ENCODE measurements at regions of chr4 and their contacts with region 1.

Region 1: GRCh38 chr4:72295966-72296557 is 264.3 kb downstream of the NPFFR2 start:
- DNase-seq: peak; percentile 57
- ATAC-seq: peak; percentile 98
- H3K4me3 ChIP-seq: no peak overlapping the region
- H3K27ac ChIP-seq: no peak overlapping the region
- H3K4me1 ChIP-seq: no peaks in the 10 kb centered on the region
- H3K27me3 ChIP-seq: no peaks in the 10 kb centered on the region
- CTCF ChIP-seq: peak; percentile 75
- POLR2A ChIP-seq: no peak
- RAD21 ChIP-seq: peak; percentile 78

Region 2: DNA sequence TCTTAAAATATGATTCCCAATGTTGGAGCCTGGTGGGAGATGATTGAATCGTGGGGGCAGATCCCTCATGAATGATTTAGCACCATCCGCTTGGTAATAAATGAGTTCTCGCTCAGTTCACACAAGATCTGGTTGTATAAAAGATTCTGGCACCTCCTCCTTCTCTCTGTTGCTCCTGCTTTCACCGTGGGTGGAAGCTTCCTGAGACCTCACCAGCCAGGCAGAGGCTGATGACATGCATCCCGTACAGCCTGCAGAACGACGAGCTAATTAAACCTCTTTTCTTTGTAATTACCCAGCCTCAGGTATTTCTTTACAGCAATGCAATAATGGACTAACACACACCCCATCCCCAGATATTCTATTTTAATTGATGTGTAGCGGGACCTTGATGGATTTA is 102.0 kb before region 1 on chr4:
- CTCF ChIA-PET with region 1: no interaction called
- POLR2A ChIA-PET with region 1: no interaction called
- dilution Hi-C with region 1: no loop called
- in situ Hi-C with region 1: no loop called
- intact Hi-C with region 1: no loop called
- DNase-seq: no peak
- ATAC-seq: no peak
- H3K4me3 ChIP-seq: no peak overlapping the region
- H3K27ac ChIP-seq: no peak overlapping the region
- H3K4me1 ChIP-seq: no peaks in the 10 kb centered on the region
- H3K27me3 ChIP-seq: no peaks in the 10 kb centered on the region
- CTCF ChIP-seq: no peak
- POLR2A ChIP-seq: no peak
- RAD21 ChIP-seq: no peak

Region 3: DNA sequence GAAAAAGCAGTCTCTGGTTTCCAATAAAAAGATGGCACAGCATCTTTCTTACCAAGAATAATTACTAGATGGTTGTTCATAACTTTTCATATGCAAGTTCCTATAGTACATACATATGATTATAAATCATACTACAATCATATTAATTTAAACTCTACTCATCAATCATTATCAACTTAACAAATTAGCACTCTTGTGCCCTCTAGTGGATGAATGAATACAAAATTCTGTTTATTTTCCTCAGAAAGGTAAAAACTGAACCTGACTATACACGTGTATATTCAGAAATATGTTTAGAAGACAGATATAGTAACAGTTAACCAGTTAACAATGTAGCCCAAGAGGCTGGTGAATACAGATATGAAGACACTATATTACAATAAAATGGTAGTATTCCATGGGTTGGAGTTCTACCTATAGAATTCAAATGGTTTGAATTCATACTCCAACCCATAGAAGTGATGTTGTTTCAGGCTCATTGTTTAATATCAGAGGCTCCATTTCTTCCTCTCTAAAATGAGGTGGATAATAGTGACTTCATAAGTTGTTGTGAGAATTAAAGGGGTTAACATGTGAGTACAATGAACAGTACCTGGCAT is 172.9 kb after region 1 on chr4:
- CTCF ChIA-PET with region 1: interaction called, 4 read pairs
- POLR2A ChIA-PET with region 1: no interaction called
- dilution Hi-C with region 1: no loop called
- in situ Hi-C with region 1: no loop called
- intact Hi-C with region 1: loop called (anchors 1 kb)
- DNase-seq: peak; percentile 20
- ATAC-seq: no peak
- H3K4me3 ChIP-seq: no peak overlapping the region
- H3K27ac ChIP-seq: no peak overlapping the region
- H3K4me1 ChIP-seq: no peaks in the 10 kb centered on the region
- H3K27me3 ChIP-seq: no peaks in the 10 kb centered on the region
- CTCF ChIP-seq: peak; percentile 61
- POLR2A ChIP-seq: no peak
- RAD21 ChIP-seq: peak; percentile 49

Region 4: DNA sequence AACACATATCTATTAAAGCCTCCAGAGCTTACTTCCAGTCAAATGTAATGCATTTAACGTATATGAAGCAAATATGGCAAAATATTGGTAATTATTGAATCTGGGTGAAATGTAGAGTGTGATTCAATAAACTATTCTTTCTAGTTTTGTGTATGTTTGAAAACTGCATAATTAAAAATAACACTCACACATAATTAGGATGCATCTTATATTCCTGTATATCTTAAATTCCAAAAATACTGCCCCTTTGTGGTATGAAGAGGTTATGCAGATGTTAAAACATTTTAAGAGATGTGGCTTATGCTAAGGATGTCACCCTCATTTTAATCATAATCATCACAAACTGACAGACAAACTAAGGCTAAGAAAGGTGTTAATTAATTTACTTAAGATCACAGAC is 590.5 kb after region 1 on chr4:
- CTCF ChIA-PET with region 1: no interaction called
- POLR2A ChIA-PET with region 1: no interaction called
- dilution Hi-C with region 1: no loop called
- in situ Hi-C with region 1: no loop called
- intact Hi-C with region 1: loop called (anchors 5 kb)
- DNase-seq: no peak
- ATAC-seq: 0 out of 2 replicates have a peak, but pooled peaks have one; percentile 40
- H3K4me3 ChIP-seq: no peak overlapping the region
- H3K27ac ChIP-seq: no peak overlapping the region
- H3K4me1 ChIP-seq: no peaks in the 10 kb centered on the region
- H3K27me3 ChIP-seq: no peaks in the 10 kb centered on the region
- CTCF ChIP-seq: peak; percentile 39
- POLR2A ChIP-seq: no peak
- RAD21 ChIP-seq: no peak

Region 5: GRCh38 chr4:73019462-73020047 is 723.5 kb after region 1 on chr4:
- CTCF ChIA-PET with region 1: no interaction called
- POLR2A ChIA-PET with region 1: no interaction called
- dilution Hi-C with region 1: no loop called
- in situ Hi-C with region 1: no loop called
- intact Hi-C with region 1: loop called (anchors 2 kb)
- DNase-seq: peak; percentile 47
- ATAC-seq: peak; percentile 27; the same call in 1 of the 2 replicates
- H3K4me3 ChIP-seq: no peak overlapping the region
- H3K27ac ChIP-seq: no peak overlapping the region
- H3K4me1 ChIP-seq: no peaks in the 10 kb centered on the region
- H3K27me3 ChIP-seq: no peaks in the 10 kb centered on the region; the same call in 1 of the 2 replicates
- CTCF ChIP-seq: peak; percentile 83
- POLR2A ChIP-seq: no peak
- RAD21 ChIP-seq: peak; percentile 80

Region 6: DNA sequence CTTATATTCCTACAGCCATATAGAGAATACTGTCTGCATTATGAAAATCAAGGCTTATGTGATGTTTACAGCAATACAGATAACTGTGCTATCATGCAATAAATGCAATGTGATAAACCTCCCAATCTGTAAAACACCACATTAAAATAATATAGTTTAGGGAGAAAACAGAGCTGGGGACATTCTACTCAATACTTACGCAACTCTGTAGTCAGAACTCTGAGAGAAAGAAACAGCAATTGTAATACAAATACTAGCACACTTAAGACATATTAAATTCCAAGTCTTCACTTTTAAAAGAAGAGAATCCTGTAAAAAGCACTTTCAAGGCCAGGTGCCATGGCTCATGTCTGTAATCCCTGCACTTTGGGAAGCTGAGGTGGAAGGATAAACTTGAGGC is 901.2 kb after region 1 on chr4:
- CTCF ChIA-PET with region 1: no interaction called
- POLR2A ChIA-PET with region 1: no interaction called
- dilution Hi-C with region 1: no loop called
- in situ Hi-C with region 1: no loop called
- intact Hi-C with region 1: no loop called
- DNase-seq: peak; percentile 33
- ATAC-seq: peak; percentile 40; the same call in 1 of the 2 replicates
- H3K4me3 ChIP-seq: no peak overlapping the region
- H3K27ac ChIP-seq: peak overlapping the region; percentile 72; the same call in 1 of the 2 replicates
- H3K4me1 ChIP-seq: peaks cover 15% of the 10 kb centered on the region
- H3K27me3 ChIP-seq: no peaks in the 10 kb centered on the region
- CTCF ChIP-seq: no peak
- POLR2A ChIP-seq: no peak
- RAD21 ChIP-seq: no peak

Measured in IMR-90 (cell line).